ENCODE measurements at regions of chr15 and their contacts with region 1.

Region 1: DNA sequence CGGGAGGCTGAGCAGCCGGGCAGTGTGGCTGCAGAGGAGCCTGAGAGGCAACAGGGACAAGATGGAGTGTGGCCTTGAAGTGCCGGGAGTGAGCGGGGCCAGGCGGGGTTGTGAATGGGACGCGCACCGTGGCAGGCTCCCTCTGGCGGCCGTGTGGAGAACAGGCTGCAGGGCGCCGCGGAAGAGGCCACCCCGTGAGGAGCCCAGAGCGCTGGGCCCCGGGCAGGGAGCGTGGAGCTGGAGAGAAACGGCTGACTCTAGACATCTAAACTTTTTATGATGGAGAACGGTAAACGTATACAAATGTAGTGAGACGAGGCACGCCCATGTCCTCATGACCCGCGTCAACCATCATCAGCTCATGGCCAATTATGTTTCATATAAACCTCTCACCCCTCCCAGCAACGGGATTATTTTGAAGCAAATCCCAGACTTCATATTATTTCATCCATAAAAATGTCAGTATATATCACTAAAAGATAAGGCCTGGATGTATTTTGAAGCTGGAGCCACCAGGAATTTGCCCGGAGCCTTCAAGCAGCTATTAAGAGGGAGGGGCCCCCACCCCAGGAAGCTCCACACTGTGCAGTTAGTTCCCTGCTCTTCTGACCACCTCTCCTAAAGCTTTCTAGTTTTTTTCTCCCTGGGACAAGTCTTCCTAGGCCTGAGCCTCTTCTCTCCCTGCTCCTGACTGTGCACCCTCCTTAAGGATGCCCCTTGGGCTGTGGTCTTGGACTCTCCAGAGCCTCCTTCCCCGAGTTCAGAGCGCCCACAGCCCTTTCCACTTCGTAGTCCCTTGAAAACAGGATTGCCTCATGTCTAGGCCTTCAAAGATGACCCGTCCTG is 149.4 kb downstream of the SMAD6 start:
- DNase-seq: peak; percentile 92
- ATAC-seq: peak; percentile 93

Region 2: GRCh38 chr15:66603301-66604179 is 247.9 kb before region 1 on chr15:
- intact Hi-C with region 1: loop called (anchors 5 kb)
- DNase-seq: peak; percentile 77
- ATAC-seq: peak; percentile 87

Region 3: GRCh38 chr15:66619151-66619903 is 232.1 kb before region 1 on chr15:
- intact Hi-C with region 1: loop called (anchors 5 kb)
- DNase-seq: peak; percentile 89
- ATAC-seq: peak; percentile 84

Region 4: DNA sequence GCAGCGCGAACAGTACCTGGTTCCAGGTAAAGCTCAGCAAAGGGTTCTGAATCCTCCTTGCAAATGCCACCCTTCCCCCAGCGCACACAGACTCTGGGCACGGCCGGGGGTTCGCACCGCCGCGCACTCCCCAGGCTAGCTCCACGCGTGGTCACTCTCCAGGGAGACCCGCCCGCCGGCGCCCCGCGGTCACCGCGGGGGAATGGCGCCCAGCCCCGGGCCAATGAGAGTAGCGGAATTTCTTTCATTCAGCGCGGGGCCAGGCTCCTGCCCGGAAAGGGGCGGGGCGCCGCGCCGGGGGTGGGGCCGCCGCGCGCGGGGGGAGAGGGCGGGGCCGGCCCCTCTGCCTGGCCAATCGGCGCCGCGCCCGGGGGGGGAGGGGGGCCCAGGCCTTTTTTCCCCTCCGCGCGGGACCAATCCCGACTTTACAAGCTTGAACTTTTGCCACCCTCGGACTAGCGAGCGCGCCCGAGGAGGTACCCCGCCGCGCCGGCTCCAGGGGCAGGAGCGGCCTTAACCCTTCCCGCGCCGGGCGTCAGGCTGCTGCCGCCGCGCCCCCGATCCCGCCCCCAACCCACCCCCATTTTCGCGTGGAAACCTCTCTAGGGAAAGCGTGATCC is 150.5 kb before region 1 on chr15:
- intact Hi-C with region 1: loop called (anchors 5 kb)
- DNase-seq: peak; percentile 97
- ATAC-seq: peak; percentile 83

Region 5: DNA sequence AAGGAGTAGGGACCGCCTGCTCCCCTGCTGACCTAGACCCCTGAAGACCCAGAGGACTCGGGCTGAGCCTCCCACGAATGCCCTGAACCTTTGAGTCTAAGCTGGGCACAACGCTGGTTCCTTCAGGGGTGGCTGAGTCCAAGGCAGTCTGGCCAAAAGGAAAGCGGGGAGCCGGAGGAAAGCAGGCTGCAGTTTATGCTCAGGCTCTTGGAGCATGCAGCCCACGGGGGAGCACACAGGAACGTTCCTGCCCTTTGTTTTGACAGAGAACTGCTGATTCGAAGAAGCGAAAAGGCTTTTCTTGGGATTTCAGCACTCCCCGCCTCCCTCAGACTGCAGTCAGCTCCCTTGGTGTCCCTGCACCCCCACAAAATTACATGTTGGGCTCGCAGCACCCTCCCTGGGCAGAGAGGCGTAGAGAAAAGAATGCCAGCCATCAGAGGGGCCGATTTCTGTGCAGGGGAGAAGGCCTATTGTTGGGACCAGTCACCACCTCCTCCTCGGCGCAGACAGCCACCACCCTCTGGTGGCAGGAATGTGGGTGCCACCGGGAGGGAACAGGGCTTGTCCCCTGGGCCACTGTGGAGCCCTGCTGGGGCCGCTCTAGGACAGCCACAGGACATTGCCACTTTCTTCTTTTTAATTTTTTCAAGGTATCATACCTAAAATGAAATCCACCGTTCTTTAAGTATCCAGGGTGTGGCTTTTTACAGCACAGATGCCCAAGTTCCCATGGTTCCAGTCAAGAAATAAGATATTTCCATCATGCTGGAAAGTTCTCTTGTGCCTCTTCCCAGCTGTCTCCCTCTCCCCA is 77.2 kb before region 1 on chr15:
- intact Hi-C with region 1: loop called (anchors 5 kb)
- DNase-seq: peak; percentile 90
- ATAC-seq: peak; percentile 96

Measured in Right ventricle myocardium superior (tissue), 1 donor.